ENCODE measurements at regions of chr12 and their contacts with region 1.

Region 1: GRCh38 chr12:129911428-129912049 is 7.7 kb upstream of the TMEM132D start:
- DNase-seq: peak; percentile 41 to 45
- H3K4me3 ChIP-seq: no peak overlapping the region
- H3K4me3 Mint-ChIP-seq: no peak overlapping the region
- H3K27ac Mint-ChIP-seq: no peak overlapping the region
- H3K4me1 ChIP-seq: no peaks in the 10 kb centered on the region
- H3K4me1 Mint-ChIP-seq: no peaks in the 10 kb centered on the region
- H3K27me3 ChIP-seq: no peaks in the 10 kb centered on the region
- H3K27me3 Mint-ChIP-seq: peaks cover 4% of the 10 kb centered on the region
- CTCF ChIP-seq: peak; percentile 66 to 72

Region 2: GRCh38 chr12:128259556-128260070 is 1651.9 kb before region 1 on chr12:
- CTCF ChIA-PET with region 1: interaction called, 5 read pairs
- POLR2A ChIA-PET with region 1: no interaction called
- intact Hi-C with region 1: loop called (anchors 2 kb)
- DNase-seq: peak in 1 of 2 experiments; percentile 9
- H3K4me3 ChIP-seq: no peak overlapping the region
- H3K4me3 Mint-ChIP-seq: no peak overlapping the region
- H3K27ac Mint-ChIP-seq: no peak overlapping the region
- H3K4me1 ChIP-seq: no peaks in the 10 kb centered on the region
- H3K4me1 Mint-ChIP-seq: no peaks in the 10 kb centered on the region
- H3K27me3 ChIP-seq: no peaks in the 10 kb centered on the region
- H3K27me3 Mint-ChIP-seq: peaks cover 2% of the 10 kb centered on the region
- CTCF ChIP-seq: peak; percentile 36 to 72

Region 3: GRCh38 chr12:128783129-128783574 is 1128.4 kb before region 1 on chr12:
- CTCF ChIA-PET with region 1: no interaction called
- POLR2A ChIA-PET with region 1: no interaction called
- intact Hi-C with region 1: loop called (anchors 2 kb)
- DNase-seq: no peak
- H3K4me3 ChIP-seq: no peak overlapping the region
- H3K4me3 Mint-ChIP-seq: no peak overlapping the region
- H3K27ac Mint-ChIP-seq: no peak overlapping the region
- H3K4me1 ChIP-seq: no peaks in the 10 kb centered on the region
- H3K4me1 Mint-ChIP-seq: no peaks in the 10 kb centered on the region
- H3K27me3 ChIP-seq: no peaks in the 10 kb centered on the region
- H3K27me3 Mint-ChIP-seq: no peaks in the 10 kb centered on the region
- CTCF ChIP-seq: no peak

Region 4: GRCh38 chr12:128969480-128970055 is 942.0 kb before region 1 on chr12:
- CTCF ChIA-PET with region 1: interaction called, 3 read pairs
- POLR2A ChIA-PET with region 1: no interaction called
- intact Hi-C with region 1: loop called (anchors 1 kb)
- DNase-seq: peak; percentile 49 to 55
- H3K4me3 ChIP-seq: no peak overlapping the region
- H3K4me3 Mint-ChIP-seq: no peak overlapping the region
- H3K27ac Mint-ChIP-seq: no peak overlapping the region
- H3K4me1 ChIP-seq: no peaks in the 10 kb centered on the region
- H3K4me1 Mint-ChIP-seq: no peaks in the 10 kb centered on the region
- H3K27me3 ChIP-seq: no peaks in the 10 kb centered on the region
- H3K27me3 Mint-ChIP-seq: peaks cover 18% of the 10 kb centered on the region
- CTCF ChIP-seq: peak; percentile 60 to 62

Region 5: GRCh38 chr12:129193263-129193871 is 718.2 kb before region 1 on chr12:
- CTCF ChIA-PET with region 1: no interaction called
- POLR2A ChIA-PET with region 1: no interaction called
- intact Hi-C with region 1: loop called (anchors 1 kb)
- DNase-seq: peak in 1 of 2 experiments; percentile 9
- H3K4me3 ChIP-seq: no peak overlapping the region
- H3K4me3 Mint-ChIP-seq: no peak overlapping the region
- H3K27ac Mint-ChIP-seq: no peak overlapping the region
- H3K4me1 ChIP-seq: no peaks in the 10 kb centered on the region
- H3K4me1 Mint-ChIP-seq: no peaks in the 10 kb centered on the region
- H3K27me3 ChIP-seq: no peaks in the 10 kb centered on the region
- H3K27me3 Mint-ChIP-seq: no peaks in the 10 kb centered on the region
- CTCF ChIP-seq: peak; percentile 45 to 60

Region 6: DNA sequence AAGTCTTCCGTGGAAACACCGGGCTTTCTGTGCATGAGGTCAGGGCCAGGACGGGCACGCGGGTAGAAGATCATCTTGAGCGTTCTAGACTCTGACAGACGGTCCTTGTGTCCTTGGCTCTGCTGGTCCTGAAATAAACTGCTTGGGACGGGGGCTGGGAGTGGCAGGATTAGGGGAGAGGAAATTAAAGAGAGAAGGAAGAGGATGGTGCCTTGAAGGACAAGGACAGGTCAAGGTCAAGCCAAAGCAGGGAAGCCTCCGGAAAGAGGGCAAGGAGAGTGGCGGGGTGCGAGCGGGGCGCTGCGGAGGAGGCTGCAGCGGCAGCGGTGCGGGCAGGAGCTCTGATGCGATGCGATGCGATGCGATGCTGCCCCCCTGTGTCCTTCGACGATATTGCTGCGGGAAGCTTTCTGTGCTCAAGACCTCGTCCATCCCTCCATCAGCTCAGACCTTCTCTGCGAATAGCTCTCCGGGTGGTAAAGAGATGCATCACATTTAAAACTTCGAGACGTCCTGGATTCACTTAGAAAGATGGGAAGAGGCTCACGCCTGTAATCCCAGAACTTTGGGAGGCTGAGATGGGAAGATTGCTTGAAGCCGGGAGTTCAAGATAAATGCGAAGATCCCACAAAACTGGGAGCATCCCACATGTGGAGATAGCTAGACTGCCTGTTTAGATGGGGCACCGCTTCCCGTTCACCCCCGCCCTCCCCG is 102.4 kb after region 1 on chr12:
- CTCF ChIA-PET with region 1: no interaction called
- POLR2A ChIA-PET with region 1: no interaction called
- intact Hi-C with region 1: loop called (anchors 2 kb)
- DNase-seq: peak in 1 of 2 experiments; percentile 67
- H3K4me3 ChIP-seq: no peak overlapping the region
- H3K4me3 Mint-ChIP-seq: no peak overlapping the region
- H3K27ac Mint-ChIP-seq: no peak overlapping the region
- H3K4me1 ChIP-seq: no peaks in the 10 kb centered on the region
- H3K4me1 Mint-ChIP-seq: no peaks in the 10 kb centered on the region
- H3K27me3 ChIP-seq: no peaks in the 10 kb centered on the region
- H3K27me3 Mint-ChIP-seq: no peaks in the 10 kb centered on the region
- CTCF ChIP-seq: peak; percentile 46 to 72

Region 7: GRCh38 chr12:130070126-130070611 is 158.6 kb after region 1 on chr12:
- CTCF ChIA-PET with region 1: no interaction called
- POLR2A ChIA-PET with region 1: no interaction called
- intact Hi-C with region 1: no loop called
- DNase-seq: peak; percentile 38 to 74
- H3K4me3 ChIP-seq: peak overlapping the region; percentile 5; the same call in 1 of the 2 replicates
- H3K4me3 Mint-ChIP-seq: peak overlapping the region; percentile 59
- H3K27ac Mint-ChIP-seq: no peak overlapping the region
- H3K4me1 ChIP-seq: no peaks in the 10 kb centered on the region
- H3K4me1 Mint-ChIP-seq: no peaks in the 10 kb centered on the region
- H3K27me3 ChIP-seq: no peaks in the 10 kb centered on the region
- H3K27me3 Mint-ChIP-seq: no peaks in the 10 kb centered on the region
- CTCF ChIP-seq: no peak

Measured in Caco-2 (cell line).